Common myeloid progenitor, CD34-positive (primary cell): ENCODE measurements at regions of chr11 and their contacts with region 1.

Region 1: DNA sequence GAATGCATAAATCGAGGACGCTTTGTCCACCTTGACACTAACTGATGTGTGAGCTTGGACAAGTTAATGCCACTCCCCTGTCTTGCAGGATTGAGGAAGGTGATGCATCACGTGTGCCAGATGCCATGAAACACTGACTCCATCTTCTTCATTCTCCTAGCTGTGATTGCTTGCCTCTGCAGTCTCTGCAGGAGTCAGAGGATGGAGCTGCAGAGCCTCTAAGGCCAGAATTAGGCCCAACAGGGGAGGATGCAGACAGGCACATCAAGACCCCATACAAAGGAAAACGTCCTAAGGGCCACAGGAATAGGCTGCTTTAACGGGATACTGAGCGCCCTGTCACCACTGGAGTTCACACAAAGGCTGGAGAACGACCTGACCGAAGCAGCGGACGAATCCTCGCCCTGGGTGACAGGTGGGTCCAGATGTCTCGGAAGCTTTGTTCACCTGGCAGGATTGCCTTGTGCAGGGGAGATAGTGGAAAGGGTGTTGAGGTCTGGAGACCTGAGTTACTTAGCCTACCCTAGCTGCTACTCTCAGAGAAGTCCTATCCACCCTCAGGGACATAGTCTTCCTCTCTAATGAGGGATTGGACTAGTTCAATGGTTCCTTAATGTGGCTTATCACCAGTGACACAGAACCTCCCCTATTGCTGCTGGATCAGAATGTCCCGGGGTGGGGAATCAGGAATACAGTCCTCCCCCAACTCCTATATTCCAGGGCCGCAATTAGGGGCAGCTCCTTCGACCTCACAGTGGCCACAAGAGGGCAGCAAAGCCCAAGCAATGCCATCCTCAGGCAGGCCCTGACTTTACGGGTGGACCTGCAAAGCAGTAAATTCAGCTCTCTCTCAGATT is 32.4 kb downstream of the DBX1 start:
- DNase-seq: peak; percentile 59 to 84 (median 77)
- H3K4me3 ChIP-seq: no peak overlapping the region
- H3K27ac ChIP-seq: no peak overlapping the region
- H3K4me1 ChIP-seq: peaks cover 0 to 11% (median 7%) of the 10 kb centered on the region in 4 experiments
- H3K27me3 ChIP-seq: peaks cover 0 to 27% (median 18%) of the 10 kb centered on the region in 5 experiments

Region 2: DNA sequence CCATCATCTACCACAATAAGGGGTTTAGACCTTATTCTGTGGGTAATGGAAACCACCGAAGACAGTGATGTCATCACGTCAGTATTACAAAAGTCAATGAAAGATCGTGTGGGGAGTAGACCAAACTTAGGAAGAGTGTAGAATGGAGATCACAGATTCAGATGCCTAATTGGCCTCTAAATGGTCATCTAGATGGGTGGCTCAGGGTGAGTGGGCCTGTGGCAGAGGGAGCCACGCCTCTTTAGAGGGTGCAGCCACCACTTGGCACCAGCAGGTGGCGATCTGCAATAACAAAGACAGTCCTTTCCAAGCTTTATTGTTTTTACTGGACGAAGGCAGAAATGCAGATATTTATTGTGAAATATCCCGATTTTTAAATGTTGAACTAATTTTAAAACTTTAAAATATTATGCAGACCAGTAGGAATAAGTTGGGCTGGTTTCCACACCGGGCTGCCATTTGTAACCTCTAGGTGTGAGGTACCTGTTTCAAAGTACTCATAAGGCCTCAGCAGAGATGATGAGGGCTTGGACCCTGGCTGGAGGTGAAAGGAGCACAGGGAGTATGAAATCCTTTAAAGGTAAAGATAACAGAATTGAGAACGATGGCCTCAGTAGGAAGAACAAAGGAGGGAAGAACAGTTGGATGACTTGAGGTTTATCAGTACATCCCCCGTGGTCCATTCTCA is 189.6 kb before region 1 on chr11:
- CTCF ChIA-PET with region 1: interaction called, 10 read pairs
- POLR2A ChIA-PET with region 1: no interaction called
- DNase-seq: peak; percentile 32 to 62 (median 53)
- H3K4me3 ChIP-seq: no peak overlapping the region
- H3K27ac ChIP-seq: no peak overlapping the region
- H3K4me1 ChIP-seq: no peaks in the 10 kb centered on the region
- H3K27me3 ChIP-seq: no peaks in the 10 kb centered on the region

Region 3: GRCh38 chr11:20050551-20051333 is 77.2 kb before region 1 on chr11:
- CTCF ChIA-PET with region 1: no interaction called
- POLR2A ChIA-PET with region 1: no interaction called
- DNase-seq: no peak
- H3K4me3 ChIP-seq: no peak overlapping the region
- H3K27ac ChIP-seq: no peak overlapping the region
- H3K4me1 ChIP-seq: peaks cover 7 to 12% (median 9%) of the 10 kb centered on the region in 4 experiments
- H3K27me3 ChIP-seq: no peaks in the 10 kb centered on the region

Region 4: DNA sequence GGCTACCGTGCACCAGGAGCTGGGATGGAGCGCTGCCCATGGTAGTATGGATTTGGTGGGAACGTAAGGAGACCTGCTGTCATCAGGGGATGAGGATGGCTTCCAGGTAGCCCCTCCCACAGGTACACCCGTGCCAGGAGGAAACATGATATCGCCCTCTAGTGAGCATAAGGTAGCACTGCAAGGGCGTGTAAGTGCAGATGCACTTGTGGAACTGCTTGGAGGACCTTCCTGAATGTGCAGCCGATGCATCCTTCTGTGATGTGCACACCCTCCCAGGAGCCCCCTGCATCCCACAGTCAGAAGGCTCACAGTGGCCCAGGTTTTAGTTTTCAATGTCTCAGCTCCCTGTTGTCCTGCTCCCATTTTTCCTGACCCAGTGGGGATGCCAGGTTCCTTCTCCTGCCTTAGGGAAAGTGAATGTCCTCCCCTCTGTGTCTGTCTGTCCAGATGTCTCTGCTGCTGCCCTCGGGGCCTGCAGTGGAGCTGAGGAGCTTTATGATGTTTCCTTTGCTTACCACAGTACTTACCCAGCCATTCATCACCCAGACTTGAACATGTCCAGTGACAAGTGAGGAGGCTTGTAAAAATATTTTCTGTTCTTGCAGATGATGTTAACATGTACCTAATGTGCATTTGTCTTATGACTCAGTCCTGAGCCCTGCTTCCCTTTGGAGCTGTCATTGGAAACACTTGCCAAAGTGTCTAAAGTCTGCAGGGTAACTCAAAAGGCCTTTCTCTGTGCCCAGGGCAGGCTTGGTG is 16.8 kb before region 1 on chr11:
- CTCF ChIA-PET with region 1: interaction called, 30 read pairs
- POLR2A ChIA-PET with region 1: no interaction called
- DNase-seq: peak; percentile 50 to 65 (median 64)
- H3K4me3 ChIP-seq: no peak overlapping the region
- H3K27ac ChIP-seq: no peak overlapping the region
- H3K4me1 ChIP-seq: peaks cover 0 to 12% (median 0%) of the 10 kb centered on the region in 4 experiments
- H3K27me3 ChIP-seq: peaks cover 0 to 2% (median 0%) of the 10 kb centered on the region in 5 experiments

Region 5: DNA sequence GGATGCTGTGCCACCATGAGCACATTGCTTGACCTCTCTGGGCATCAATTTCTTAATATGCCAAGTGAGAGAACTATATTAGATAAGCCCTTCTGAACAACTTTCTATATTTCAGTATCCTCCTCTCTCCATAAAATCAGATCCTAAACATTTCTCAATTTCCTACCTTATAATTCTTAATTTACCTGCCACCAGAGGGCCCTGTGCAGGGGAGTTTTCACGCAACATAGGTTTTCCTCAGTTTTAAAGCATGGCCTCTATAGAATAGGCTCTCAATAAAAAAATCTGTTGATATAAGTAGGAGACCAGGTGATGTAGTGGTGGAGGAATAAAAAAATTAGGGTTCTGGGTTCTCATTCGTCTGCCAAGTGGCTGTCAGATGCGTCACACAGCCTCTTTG is 116.1 kb after region 1 on chr11:
- CTCF ChIA-PET with region 1: no interaction called
- POLR2A ChIA-PET with region 1: no interaction called
- DNase-seq: no peak
- H3K4me3 ChIP-seq: no peak overlapping the region
- H3K27ac ChIP-seq: no peak overlapping the region
- H3K4me1 ChIP-seq: no peaks in the 10 kb centered on the region
- H3K27me3 ChIP-seq: peaks cover 0 to 17% (median 6%) of the 10 kb centered on the region in 5 experiments

Region 6: GRCh38 chr11:20337526-20338154 is 209.7 kb after region 1 on chr11:
- CTCF ChIA-PET with region 1: interaction called, 13 read pairs
- POLR2A ChIA-PET with region 1: no interaction called
- DNase-seq: peak; percentile 25 to 59 (median 52)
- H3K4me3 ChIP-seq: no peak overlapping the region
- H3K27ac ChIP-seq: no peak overlapping the region
- H3K4me1 ChIP-seq: no peaks in the 10 kb centered on the region
- H3K27me3 ChIP-seq: peaks cover 3 to 25% (median 9%) of the 10 kb centered on the region in 5 experiments

Region 7: DNA sequence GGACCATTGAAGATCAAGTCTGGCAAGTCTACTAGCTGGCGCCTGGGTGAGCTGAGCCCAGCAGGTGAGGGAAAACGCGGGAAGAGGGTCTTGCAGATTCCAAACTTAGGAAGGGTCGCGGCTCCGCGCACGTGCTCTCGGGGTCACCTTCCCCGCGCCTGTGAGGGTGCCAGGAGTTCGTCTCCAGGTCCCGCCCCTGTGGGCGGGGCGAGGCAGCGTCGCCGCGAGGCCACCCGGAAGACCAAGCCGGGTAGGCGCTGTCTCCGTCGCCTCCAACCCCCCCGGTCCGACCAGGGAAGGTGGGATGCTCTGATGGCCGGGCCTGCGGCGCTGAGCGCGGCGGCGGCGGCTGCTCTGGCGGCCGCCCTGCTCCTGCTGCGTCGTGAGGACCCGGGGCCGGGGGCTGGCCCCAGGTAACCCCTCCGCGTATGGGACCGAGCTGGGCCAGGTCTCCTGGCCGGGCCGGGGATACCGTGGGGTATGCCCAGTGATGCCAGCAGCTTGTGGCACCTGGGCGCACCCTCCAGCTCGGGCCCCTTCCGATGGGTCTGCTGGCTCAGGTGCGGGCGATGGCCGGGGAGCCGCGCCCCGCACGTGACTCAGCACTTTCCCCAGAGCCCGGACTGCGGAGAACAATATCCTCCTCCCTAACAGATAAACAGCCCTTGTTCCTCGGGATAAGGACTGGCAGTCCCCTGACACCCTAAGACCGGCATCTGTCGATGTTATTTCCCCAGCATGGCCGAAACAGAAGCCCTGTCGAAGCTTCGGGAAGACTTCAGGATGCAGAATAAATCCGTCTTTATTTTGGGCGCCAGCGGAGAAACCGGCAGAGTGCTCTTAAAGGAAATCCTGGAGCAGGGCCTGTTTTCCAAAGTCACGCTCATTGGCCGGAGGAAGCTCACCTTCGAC is 235.9 kb after region 1 on chr11 and contains the start of gene HTATIP2:
- CTCF ChIA-PET with region 1: interaction called, 21 read pairs
- POLR2A ChIA-PET with region 1: no interaction called
- DNase-seq: peak; percentile 27 to 67 (median 55)
- H3K4me3 ChIP-seq: peak within 1 kb of the TSS; percentile 62 to 89 (median 75)
- H3K27ac ChIP-seq: peak within 1 kb of the TSS in 1 of 2 experiments; percentile 67
- H3K4me1 ChIP-seq: peaks cover 3 to 20% (median 13%) of the 10 kb centered on the region in 4 experiments
- H3K27me3 ChIP-seq: no peaks in the 10 kb centered on the region

Region 8: GRCh38 chr11:20511982-20512381 is 384.1 kb after region 1 on chr11:
- CTCF ChIA-PET with region 1: no interaction called
- POLR2A ChIA-PET with region 1: no interaction called
- DNase-seq: no peak
- H3K4me3 ChIP-seq: no peak overlapping the region
- H3K27ac ChIP-seq: no peak overlapping the region
- H3K4me1 ChIP-seq: no peaks in the 10 kb centered on the region
- H3K27me3 ChIP-seq: no peaks in the 10 kb centered on the region